H1 (cell line): ENCODE measurements at regions of chr9 and their contacts with region 1.

Region 1: DNA sequence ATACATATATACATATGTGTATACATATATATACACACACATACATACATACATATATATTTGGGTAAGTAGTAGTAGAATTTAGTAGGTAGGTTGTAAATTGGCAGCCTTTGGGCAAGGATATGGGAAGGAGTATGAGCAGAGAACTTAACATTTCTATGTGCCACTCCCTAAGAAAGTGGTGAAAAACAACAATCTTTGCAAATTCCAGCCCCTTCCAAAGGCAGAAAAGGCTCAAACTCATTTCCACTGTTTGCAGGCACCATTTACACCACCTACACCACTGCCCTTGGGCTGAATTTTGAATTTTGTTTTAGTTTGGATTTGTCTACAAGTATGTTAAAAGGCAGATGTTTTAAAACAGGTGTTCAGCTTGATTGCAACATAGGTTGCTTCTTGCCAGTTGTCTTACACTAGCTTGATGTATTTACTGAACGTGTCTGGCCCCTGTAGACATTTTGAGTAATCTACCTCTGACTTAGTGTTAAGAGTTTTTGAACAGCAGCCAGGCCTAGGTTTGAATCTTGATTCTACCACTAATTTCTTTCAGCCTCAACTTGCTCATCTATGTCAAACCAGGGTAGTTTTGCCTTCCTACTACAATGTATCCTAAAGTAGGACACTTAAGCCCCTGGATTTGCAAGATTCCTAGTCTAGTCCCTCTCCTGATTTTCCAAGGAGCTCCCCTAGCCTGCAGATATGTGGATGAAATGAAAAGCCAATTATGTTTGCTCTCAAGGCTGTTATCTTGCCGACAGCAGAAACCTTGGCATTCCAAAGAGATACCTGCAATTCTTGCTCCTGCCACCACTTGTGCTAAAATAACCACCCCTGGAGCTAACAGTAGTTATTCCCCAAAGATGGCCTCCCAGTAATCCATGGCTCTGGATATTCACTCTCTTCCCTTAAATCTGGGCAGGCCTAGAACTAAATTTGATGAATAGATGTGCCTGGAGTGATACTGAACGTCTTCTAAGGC is 156.3 kb upstream of the SLC44A1 start:
- DNase-seq: no peak
- H3K4me3 ChIP-seq: no peak overlapping the region
- H3K27ac ChIP-seq: no peak overlapping the region
- H3K4me1 ChIP-seq: no peaks in the 10 kb centered on the region; a peak in 1 of 7 replicates
- H3K27me3 ChIP-seq: no peaks in the 10 kb centered on the region
- CTCF ChIP-seq: peak in 1 of 3 experiments; percentile 34; a peak in 1 of 4 replicates
- EP300 ChIP-seq: no peak
- POLR2A ChIP-seq: no peak
- RAD21 ChIP-seq: no peak; a peak in 2 of 4 replicates

Region 2: DNA sequence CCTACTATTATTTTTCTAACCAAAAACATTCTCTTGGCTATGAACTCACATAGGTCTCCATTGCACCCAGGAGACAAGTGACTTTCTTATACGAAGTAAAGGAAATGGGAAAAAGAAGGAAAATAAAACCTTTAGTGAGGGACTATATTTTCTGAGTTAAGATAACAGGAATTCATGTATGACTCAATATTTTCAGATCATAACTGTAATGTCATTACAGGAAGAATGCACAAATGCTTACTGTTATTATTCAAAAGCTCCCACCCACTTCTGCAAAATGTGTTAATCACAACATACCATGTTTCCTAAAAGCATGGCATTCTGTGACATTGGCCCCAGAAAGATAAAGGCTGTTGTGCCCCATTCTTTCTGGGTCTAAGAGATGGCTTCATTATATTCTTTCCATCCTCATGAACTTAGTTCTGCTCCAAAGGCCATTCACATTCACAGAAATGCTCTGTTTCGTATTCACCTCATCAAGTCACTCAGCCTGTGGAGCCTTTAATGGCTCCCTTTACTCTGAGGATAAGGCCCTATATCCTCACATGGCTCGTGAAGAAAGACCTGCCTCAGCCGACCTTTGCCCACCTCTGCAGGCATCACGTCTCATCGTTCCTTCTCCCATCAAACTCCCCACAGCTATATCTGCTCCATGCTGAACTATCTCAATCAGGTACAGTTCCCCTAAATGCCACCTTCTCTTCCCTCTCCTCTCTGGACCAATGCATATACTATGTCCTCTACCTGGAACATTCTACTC is 237.2 kb before region 1 on chr9:
- CTCF ChIA-PET with region 1: no interaction called
- POLR2A ChIA-PET with region 1: no interaction called
- DNase-seq: no peak
- H3K4me3 ChIP-seq: no peak overlapping the region
- H3K27ac ChIP-seq: no peak overlapping the region
- H3K4me1 ChIP-seq: peaks cover 0 to 2% (median under 1%) of the 10 kb centered on the region in 4 experiments; a peak in 3 of 7 replicates
- H3K27me3 ChIP-seq: no peaks in the 10 kb centered on the region
- CTCF ChIP-seq: no peak
- EP300 ChIP-seq: no peak
- POLR2A ChIP-seq: no peak
- RAD21 ChIP-seq: no peak

Region 3: DNA sequence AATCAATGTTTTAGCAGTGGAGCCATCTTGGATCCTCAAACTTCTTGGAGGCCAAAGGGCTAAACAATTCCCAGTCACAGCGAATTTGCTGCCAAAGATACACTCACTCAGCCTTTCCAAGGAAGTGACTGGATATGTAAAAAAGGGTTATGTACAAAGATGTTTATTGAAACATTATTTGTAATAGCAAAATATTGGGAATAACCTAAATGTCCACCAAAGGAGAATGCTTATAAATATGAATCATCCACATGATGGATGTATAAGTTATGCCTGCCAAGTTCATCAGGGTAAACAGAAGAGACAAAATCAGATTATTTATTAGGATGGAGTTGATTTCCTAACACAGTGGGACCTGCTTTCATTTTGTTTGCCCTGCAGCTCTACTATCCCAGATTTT is 15.1 kb before region 1 on chr9:
- CTCF ChIA-PET with region 1: interaction called, 11 read pairs
- POLR2A ChIA-PET with region 1: no interaction called
- DNase-seq: no peak
- H3K4me3 ChIP-seq: no peak overlapping the region
- H3K27ac ChIP-seq: no peak overlapping the region
- H3K4me1 ChIP-seq: no peaks in the 10 kb centered on the region
- H3K27me3 ChIP-seq: no peaks in the 10 kb centered on the region
- CTCF ChIP-seq: no peak
- EP300 ChIP-seq: no peak
- POLR2A ChIP-seq: no peak
- RAD21 ChIP-seq: no peak